ENCODE measurements at regions of chr1 and their contacts with region 1.

Region 1: DNA sequence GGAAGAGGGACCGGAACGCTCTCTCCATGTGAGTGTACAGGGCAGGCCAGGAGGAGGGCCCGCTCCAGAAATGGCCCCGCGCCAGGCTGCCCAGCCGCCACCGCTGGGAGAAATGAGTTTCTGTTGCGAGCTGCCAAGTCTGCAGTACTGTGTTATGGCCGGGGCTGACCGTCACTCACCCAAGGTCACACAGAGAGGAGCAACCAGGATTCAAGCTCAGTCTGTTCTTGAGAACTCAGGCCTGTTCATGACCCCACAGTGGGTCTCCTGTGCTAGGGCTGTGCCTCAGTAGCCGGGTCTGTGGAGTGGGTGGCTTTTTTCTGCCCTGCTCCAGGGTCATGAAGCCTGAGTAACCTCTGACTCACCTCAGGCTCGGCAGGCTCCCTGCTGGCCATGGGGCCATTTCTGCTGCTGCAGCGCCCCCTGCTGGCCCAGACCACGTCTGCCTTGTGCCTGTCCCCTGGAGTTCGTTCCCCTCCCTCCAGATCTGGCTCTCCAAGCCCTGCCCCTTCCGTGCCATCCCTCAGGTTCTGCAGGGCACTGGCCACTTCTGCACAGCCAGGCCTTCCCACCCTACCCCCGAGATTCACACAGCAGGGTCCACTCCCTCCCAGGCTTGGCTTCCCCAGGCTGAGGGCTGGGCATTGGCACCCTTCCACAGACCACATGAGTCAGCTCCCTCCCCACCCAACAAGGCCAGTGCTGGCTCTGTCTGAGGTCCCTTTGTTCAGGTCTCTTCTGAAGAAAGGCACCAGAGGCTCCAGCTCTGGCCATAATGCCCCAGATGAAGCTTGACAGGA is 51.8 kb downstream of the EDN2 start:
- DNase-seq: peak; percentile 83 to 99
- H3K4me3 ChIP-seq: no peak overlapping the region
- H3K27ac ChIP-seq: no peak overlapping the region
- H3K4me1 ChIP-seq: peaks cover 0 to 10% (median 5%) of the 10 kb centered on the region in 4 experiments; a peak in 5 of 7 replicates
- H3K27me3 ChIP-seq: no peaks in the 10 kb centered on the region
- CTCF ChIP-seq: peak; percentile 96 to 99 (median 99)
- EP300 ChIP-seq: no peak
- POLR2A ChIP-seq: no peak
- RAD21 ChIP-seq: peak; percentile 97 to 99

Region 2: DNA sequence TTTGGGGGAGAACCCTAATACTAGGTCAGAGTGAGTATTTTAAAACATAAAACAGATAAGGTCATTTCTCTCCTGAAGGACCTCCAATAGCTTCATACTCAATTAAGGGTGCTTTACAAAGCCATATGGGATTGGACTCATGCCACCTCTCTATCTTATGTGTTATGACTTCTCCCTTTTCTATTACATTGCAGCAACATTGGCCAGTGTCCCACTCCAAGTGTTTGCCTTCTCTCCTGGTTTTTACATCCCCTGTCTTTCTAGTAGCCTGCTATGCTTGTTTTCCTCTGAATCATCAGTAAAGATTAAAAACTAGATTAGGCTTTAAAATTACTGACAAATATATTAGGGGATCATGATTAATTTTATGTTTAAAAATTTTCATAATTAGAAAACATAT is 257.1 kb before region 1 on chr1:
- CTCF ChIA-PET with region 1: no interaction called
- POLR2A ChIA-PET with region 1: no interaction called
- DNase-seq: no peak
- H3K4me3 ChIP-seq: no peak overlapping the region
- H3K27ac ChIP-seq: no peak overlapping the region
- H3K4me1 ChIP-seq: no peaks in the 10 kb centered on the region
- H3K27me3 ChIP-seq: no peaks in the 10 kb centered on the region
- CTCF ChIP-seq: no peak
- EP300 ChIP-seq: no peak
- POLR2A ChIP-seq: no peak
- RAD21 ChIP-seq: no peak

Region 3: GRCh38 chr1:41268154-41268770 is 164.4 kb before region 1 on chr1:
- CTCF ChIA-PET with region 1: interaction called, 24 read pairs
- POLR2A ChIA-PET with region 1: no interaction called
- DNase-seq: peak; percentile 41 to 92
- H3K4me3 ChIP-seq: no peak overlapping the region
- H3K27ac ChIP-seq: no peak overlapping the region
- H3K4me1 ChIP-seq: no peaks in the 10 kb centered on the region; a peak in 1 of 7 replicates
- H3K27me3 ChIP-seq: no peaks in the 10 kb centered on the region
- CTCF ChIP-seq: peak; percentile 96 to 99 (median 96)
- EP300 ChIP-seq: no peak
- POLR2A ChIP-seq: no peak
- RAD21 ChIP-seq: peak; percentile 99 to 100

Region 4: GRCh38 chr1:41305576-41306363 is 126.9 kb before region 1 on chr1:
- CTCF ChIA-PET with region 1: interaction called, 19 read pairs
- POLR2A ChIA-PET with region 1: no interaction called
- DNase-seq: peak in 1 of 2 experiments; percentile 44
- H3K4me3 ChIP-seq: no peak overlapping the region
- H3K27ac ChIP-seq: no peak overlapping the region
- H3K4me1 ChIP-seq: no peaks in the 10 kb centered on the region; a peak in 1 of 7 replicates
- H3K27me3 ChIP-seq: no peaks in the 10 kb centered on the region
- CTCF ChIP-seq: no peak
- EP300 ChIP-seq: no peak
- POLR2A ChIP-seq: no peak
- RAD21 ChIP-seq: no peak

Region 5: DNA sequence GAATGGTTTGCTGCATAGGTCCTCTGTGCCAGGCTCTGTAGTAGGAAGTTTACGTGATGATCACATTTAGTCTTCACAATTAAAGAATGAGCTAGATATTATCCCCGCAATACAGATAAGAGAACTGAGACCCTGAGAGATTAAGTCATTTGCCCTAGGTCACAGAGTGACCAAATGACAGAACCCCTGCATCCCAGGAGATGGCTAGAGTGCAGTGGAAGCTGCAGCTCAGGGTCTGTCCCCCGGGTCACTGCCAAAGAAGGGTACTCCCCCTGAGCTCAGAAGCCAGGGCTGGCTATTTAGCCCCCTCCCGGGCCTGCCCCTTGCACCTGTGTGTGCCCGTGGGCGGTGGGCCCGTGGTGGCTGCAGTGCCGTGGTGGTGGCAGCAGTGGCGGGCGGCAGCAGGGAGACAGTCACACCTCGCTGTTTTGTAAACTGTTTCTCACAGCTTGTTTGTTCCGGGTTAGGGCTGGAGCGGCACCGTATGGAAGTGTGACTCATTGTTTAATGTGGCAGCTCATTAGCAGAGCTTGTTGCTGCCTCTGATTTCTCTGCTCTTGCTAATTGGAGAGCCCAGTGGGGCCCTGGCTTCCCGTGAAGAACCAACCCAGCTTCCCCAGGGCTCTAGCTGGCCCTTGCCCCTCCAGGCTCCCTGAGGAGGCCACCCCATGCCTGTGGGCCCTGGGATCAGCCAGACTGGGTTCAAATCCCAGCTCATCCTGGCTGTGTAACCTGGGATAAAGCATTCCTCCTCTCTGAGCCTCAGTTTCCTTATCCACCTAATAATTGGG is 90.7 kb before region 1 on chr1:
- CTCF ChIA-PET with region 1: interaction called, 18 read pairs
- POLR2A ChIA-PET with region 1: no interaction called
- DNase-seq: no peak
- H3K4me3 ChIP-seq: no peak overlapping the region
- H3K27ac ChIP-seq: no peak overlapping the region
- H3K4me1 ChIP-seq: peaks cover 0 to 7% (median 2%) of the 10 kb centered on the region in 4 experiments; a peak in 3 of 7 replicates
- H3K27me3 ChIP-seq: no peaks in the 10 kb centered on the region; a peak in 2 of 7 replicates
- CTCF ChIP-seq: no peak
- EP300 ChIP-seq: no peak
- POLR2A ChIP-seq: no peak
- RAD21 ChIP-seq: no peak

Region 6: GRCh38 chr1:41411229-41411628 is 21.5 kb before region 1 on chr1:
- CTCF ChIA-PET with region 1: interaction called, 144 read pairs
- POLR2A ChIA-PET with region 1: interaction called, 3 read pairs
- DNase-seq: no peak
- H3K4me3 ChIP-seq: no peak overlapping the region
- H3K27ac ChIP-seq: no peak overlapping the region
- H3K4me1 ChIP-seq: peaks cover 4 to 13% (median 9%) of the 10 kb centered on the region in 4 experiments
- H3K27me3 ChIP-seq: peaks cover 0 to 2% (median 0%) of the 10 kb centered on the region in 4 experiments; a peak in 4 of 7 replicates
- CTCF ChIP-seq: no peak
- EP300 ChIP-seq: no peak
- POLR2A ChIP-seq: no peak
- RAD21 ChIP-seq: no peak

Region 7: DNA sequence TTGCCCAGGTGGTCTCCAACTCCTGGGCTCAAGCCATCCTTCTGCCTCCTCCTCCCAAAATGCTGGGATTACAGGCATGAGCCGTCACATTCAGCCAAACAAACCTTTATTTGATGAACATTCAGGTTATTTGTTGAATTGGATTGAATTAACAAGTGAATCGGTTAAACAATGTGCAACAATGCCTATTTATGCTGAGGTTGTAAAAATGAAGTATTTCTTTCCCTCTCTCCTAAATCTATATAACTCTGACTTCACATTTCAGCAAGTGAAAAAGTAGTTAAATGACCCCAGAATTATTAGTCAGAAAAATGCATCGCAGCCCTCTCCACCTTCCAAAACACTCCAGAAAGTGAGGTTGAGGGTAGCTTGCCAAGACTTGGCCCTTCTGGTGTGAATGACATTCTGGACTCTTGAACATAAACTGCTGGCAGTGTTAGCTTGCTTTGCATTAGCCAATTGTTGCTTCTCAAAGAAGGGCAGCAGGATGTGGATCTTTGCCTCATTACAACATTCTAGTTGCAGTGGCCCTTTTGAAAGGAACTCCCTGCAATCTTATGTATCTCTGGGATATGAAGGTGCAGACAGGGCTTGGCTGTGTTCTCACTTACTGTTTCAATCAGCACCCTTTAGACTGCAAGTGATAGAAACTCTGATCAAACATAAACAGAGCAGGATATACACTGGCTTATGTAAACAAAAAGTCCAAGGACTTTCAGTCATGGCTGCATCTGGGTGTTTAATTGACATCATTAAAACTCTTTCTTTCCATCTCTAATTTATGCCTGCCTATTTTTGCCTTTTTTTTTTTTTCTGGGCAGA is 29.3 kb after region 1 on chr1:
- CTCF ChIA-PET with region 1: interaction called, 13 read pairs
- POLR2A ChIA-PET with region 1: no interaction called
- DNase-seq: no peak
- H3K4me3 ChIP-seq: no peak overlapping the region
- H3K27ac ChIP-seq: no peak overlapping the region
- H3K4me1 ChIP-seq: no peaks in the 10 kb centered on the region
- H3K27me3 ChIP-seq: no peaks in the 10 kb centered on the region
- CTCF ChIP-seq: no peak
- EP300 ChIP-seq: no peak
- POLR2A ChIP-seq: no peak
- RAD21 ChIP-seq: no peak

Region 8: GRCh38 chr1:41678111-41678878 is 245.6 kb after region 1 on chr1:
- CTCF ChIA-PET with region 1: no interaction called
- POLR2A ChIA-PET with region 1: no interaction called
- DNase-seq: no peak
- H3K4me3 ChIP-seq: no peak overlapping the region
- H3K27ac ChIP-seq: no peak overlapping the region
- H3K4me1 ChIP-seq: peaks cover 0 to 2% (median 0%) of the 10 kb centered on the region in 4 experiments; a peak in 2 of 7 replicates
- H3K27me3 ChIP-seq: no peaks in the 10 kb centered on the region
- CTCF ChIP-seq: no peak
- EP300 ChIP-seq: no peak
- POLR2A ChIP-seq: no peak
- RAD21 ChIP-seq: no peak